Heart right ventricle (tissue), 16 donors: ENCODE measurements at regions of chr3 and their contacts with region 1.

Region 1: DNA sequence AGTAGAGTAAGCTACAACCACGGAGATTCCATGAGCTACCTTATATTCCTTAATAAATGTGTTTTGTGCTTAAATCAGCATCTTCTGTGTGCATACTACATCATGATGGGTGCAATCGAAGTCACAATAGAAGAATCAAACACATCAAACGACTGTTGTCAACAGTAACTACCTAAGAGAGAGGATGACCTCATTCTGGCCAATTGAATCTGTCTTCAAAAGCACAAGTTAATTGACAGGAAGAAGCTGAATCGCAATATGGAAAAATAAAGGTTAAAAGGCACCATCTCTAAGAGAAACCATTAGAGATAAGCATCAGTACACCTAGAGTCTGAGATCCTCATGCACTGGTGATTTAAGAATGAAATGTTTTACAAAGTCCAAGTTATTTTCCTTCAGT is 39.0 kb downstream of the CD200R1L start:
- DNase-seq: no peak
- ATAC-seq: no peak
- H3K4me3 ChIP-seq: no peak overlapping the region
- H3K27ac ChIP-seq: no peak overlapping the region
- H3K4me1 ChIP-seq: peaks cover 0 to 34% (median 10%) of the 10 kb centered on the region in 9 donors
- H3K27me3 ChIP-seq: peaks cover 0 to 6% (median 0%) of the 10 kb centered on the region in 7 donors
- CTCF ChIP-seq: no peak

Region 2: GRCh38 chr3:112734718-112735350 is 72.9 kb before region 1 on chr3:
- intact Hi-C with region 1: loop called in 4 of 10 experiments (anchors 2 to 10 kb)
- DNase-seq: peak in 1 of 2 donors; percentile 62
- ATAC-seq: peak in 6 of 8 donors; percentile 46 to 75 (median 72)
- H3K4me3 ChIP-seq: no peak overlapping the region
- H3K27ac ChIP-seq: no peak overlapping the region
- H3K4me1 ChIP-seq: peaks cover 0 to 27% (median 0%) of the 10 kb centered on the region in 9 donors
- H3K27me3 ChIP-seq: peaks cover 0 to 6% (median 0%) of the 10 kb centered on the region in 7 donors
- CTCF ChIP-seq: peak; percentile 32 to 78 (median 65)